Activated B cell treated with CpG ODN at 0.5 μM for 24 hours (primary cell): ENCODE measurements at regions of chr19 and their contacts with region 1.

Region 1: GRCh38 chr19:7799640-7800355 is 30.2 kb upstream of the EVI5L start:
- DNase-seq: peak; percentile 35
- ATAC-seq: peak; percentile 76
- H3K4me3 Mint-ChIP-seq: peak overlapping the region; percentile 66
- H3K27ac Mint-ChIP-seq: peak overlapping the region; percentile 46
- H3K4me1 Mint-ChIP-seq: peaks cover 13% of the 10 kb centered on the region
- H3K27me3 Mint-ChIP-seq: peaks cover 13% of the 10 kb centered on the region
- CTCF ChIP-seq: no peak

Region 2: DNA sequence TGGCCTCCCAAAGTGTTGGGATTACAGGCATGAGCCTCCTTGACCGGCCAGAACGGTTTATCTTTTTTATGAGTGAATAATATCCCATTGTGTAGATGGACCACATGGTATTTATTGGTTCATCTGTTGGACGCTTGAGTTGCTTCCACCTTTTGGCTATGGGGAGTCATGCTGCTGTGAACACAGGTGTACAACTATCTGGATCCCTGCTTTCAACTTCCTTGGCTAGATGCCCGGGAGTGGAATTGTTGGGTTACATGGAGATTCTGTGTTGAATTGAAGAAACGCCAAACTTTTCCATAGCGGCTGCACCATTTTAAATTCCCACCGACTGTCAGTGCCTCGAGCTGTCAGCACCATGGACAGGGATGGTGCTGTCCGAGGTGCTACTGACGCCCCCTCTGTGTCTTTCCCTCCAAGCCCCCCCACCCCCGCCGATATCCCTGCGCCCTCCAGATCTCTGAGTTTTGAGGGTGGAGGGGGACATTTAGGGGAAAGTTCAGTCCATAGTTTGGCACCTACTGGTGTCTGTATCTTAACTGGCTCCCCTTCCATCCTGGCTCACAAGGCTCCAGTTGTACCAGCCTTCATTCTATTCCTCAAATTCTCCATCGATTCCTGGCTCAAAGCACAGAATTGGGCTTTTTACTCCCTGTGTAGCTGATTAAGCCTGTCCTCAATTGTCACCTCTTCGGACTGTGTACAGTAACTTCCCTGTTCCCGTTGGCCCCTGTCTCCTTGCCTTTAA is 237.0 kb before region 1 on chr19:
- CTCF ChIA-PET with region 1: interaction called, 49 read pairs
- POLR2A ChIA-PET with region 1: no interaction called
- intact Hi-C with region 1: loop called (anchors 1 kb)
- DNase-seq: no peak
- ATAC-seq: no peak
- H3K4me3 Mint-ChIP-seq: no peak overlapping the region
- H3K27ac Mint-ChIP-seq: no peak overlapping the region
- H3K4me1 Mint-ChIP-seq: no peaks in the 10 kb centered on the region
- H3K27me3 Mint-ChIP-seq: no peaks in the 10 kb centered on the region
- CTCF ChIP-seq: no peak

Region 3: DNA sequence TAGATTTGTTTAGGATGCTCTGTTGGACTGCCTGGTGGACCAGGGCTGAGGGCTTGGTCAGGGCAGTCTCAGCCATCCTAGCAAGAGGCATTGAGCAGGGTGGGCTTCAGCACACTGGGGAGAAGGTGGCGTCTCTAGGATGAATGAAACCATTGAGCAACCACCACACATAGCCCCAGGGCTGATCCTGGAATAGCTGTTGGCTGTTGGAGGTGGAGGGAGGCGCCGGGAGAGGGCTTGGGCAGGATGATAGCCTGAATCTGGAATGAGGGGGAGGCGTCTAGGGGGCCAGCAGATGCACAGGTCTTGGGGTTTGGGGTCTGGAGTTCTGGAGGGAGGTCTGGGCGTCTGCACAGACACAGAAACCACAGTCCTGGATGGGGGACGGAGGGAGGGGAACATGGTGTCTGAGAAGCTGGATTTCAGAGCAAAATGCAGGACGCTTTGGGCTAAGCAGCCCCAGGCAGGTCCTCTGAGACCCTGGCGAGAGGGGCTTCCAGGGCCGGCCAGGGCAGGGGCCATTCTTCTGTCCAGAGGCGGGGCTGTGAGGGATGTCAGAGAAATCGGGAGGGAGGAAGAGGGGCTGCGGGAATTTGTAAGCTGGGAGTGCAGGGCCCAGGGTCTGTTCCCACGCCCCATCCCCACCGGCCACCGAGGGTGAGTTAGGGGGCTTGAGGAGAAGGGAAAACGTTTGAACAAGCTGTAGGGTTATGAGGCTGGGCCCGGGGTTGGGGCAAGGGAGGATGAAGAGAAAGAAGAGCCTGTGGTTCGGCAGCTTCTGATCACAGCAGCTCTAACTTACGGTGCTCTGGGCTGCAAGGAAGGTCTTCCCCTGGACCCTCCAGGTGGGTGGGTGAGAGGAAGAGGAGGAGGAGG is 114.0 kb before region 1 on chr19:
- CTCF ChIA-PET with region 1: interaction called, 64 read pairs
- POLR2A ChIA-PET with region 1: interaction called, 45 read pairs
- intact Hi-C with region 1: no loop called
- DNase-seq: no peak
- ATAC-seq: no peak
- H3K4me3 Mint-ChIP-seq: no peak overlapping the region
- H3K27ac Mint-ChIP-seq: peak overlapping the region; percentile 72
- H3K4me1 Mint-ChIP-seq: peaks cover 32% of the 10 kb centered on the region
- H3K27me3 Mint-ChIP-seq: no peaks in the 10 kb centered on the region
- CTCF ChIP-seq: no peak

Region 4: GRCh38 chr19:7743425-7743841 is 56.4 kb before region 1 on chr19:
- CTCF ChIA-PET with region 1: interaction called, 5 read pairs
- POLR2A ChIA-PET with region 1: interaction called, 7 read pairs
- intact Hi-C with region 1: loop called (anchors 2 kb)
- DNase-seq: peak; percentile 64
- ATAC-seq: peak; percentile 94
- H3K4me3 Mint-ChIP-seq: peak overlapping the region; percentile 45
- H3K27ac Mint-ChIP-seq: peak overlapping the region; percentile 77
- H3K4me1 Mint-ChIP-seq: peaks cover 57% of the 10 kb centered on the region
- H3K27me3 Mint-ChIP-seq: peaks cover 8% of the 10 kb centered on the region
- CTCF ChIP-seq: no peak

Region 5: DNA sequence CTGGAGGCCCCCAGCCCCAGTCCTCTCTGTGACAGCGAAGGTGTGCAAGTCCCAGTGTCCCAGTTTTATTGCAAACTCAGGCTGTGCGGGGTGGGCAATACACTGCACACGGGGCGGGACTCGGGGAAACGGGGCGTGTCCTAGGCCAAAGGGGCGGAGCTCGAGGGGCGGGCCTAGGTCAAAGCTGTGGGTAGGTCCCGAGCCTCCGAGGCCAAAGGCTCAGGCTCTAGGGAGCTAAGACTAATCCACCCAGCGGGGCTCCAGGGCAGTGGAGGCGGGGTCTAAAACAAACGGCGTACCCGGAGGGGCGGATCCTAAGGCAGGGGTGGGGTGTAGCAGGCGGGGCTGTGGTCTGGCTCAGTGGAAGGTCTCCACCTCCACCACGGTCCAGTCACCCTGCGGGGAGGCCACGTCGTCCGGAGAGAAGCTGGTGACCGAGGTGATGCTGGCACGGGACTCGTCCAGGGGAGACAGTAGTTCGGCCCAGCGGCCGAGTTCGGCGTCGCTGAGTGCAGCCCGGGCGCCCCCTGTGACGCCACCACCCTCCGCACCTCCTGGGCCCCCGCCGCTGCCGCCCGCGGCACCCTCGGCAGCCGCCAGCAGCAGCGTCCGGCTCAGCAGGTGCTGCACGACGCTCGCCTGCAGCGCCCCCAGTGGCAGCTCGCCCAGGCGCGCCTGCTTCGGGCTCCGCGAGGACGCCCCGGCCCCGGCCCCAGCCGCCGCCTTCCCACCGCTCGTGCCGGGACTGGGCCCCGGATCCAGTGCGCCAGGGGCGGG is 69.1 kb after region 1 on chr19:
- CTCF ChIA-PET with region 1: interaction called, 14 read pairs
- POLR2A ChIA-PET with region 1: no interaction called
- intact Hi-C with region 1: no loop called
- DNase-seq: peak; percentile 83
- ATAC-seq: peak; percentile 75
- H3K4me3 Mint-ChIP-seq: peak overlapping the region; percentile 81
- H3K27ac Mint-ChIP-seq: peak overlapping the region; percentile 73
- H3K4me1 Mint-ChIP-seq: peaks cover 41% of the 10 kb centered on the region
- H3K27me3 Mint-ChIP-seq: peaks cover 30% of the 10 kb centered on the region
- CTCF ChIP-seq: peak; percentile 56